CD4-positive, alpha-beta T cell (primary cell): ENCODE measurements at regions of chr19 and their contacts with region 1.

Region 1: DNA sequence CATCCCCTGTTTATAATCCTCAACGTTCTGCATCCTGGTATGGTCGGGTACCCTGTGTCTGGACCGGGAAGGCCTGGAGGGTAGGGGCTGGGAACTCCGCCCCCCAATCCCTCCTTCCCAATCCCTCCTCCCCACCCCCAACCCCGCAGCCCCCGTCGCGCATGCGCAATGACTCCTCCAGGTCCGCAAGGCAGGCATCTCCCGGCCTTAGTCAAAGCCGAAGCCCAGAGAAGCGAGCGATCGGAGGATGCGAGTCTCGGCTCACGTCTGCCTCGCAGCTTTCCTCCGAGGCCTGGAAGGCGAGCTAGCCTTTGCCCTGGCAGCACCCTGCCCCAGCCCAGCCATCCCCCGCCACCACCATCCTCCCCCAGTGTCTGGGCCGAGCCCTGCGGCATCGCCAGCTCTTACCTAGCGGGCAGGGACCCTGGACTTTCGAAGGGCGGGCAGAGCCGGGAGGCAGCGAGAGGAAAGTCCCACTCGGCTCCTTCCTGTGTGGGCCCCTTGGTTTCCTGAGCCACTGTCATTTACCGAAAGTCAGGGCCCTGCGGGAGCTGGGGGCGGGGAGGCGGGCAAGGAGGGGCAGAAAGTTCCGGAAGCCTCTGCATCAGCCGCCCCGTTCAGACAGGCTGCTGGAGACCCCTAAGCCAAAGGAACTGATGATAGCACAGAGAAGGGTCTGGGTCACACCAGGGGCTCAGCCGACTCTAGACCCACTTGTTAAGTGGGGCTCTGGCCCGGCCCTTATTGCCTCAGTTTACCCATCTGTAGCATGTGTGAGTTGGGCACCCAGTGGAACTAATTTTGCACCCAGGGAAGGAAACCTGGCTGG is at the start of gene JAK3:
- DNase-seq: peak; percentile 67 to 93 (median 83)
- ATAC-seq: peak; percentile 81
- H3K4me3 ChIP-seq: peak within 1 kb of the TSS; percentile 65
- H3K4me3 Mint-ChIP-seq: peak within 1 kb of the TSS; percentile 99
- H3K27ac ChIP-seq: peak within 1 kb of the TSS; percentile 90 to 98
- H3K27ac Mint-ChIP-seq: peak within 1 kb of the TSS; percentile 94
- H3K4me1 ChIP-seq: peaks cover 85% of the 10 kb centered on the region
- H3K4me1 Mint-ChIP-seq: peaks cover 72% of the 10 kb centered on the region
- H3K27me3 ChIP-seq: no peaks in the 10 kb centered on the region
- H3K27me3 Mint-ChIP-seq: no peaks in the 10 kb centered on the region
- CTCF ChIP-seq: no peak
- total RNA-seq, gene JAK3: 120 to 121 TPM

Region 2: GRCh38 chr19:16095071-16095571 is 1752.6 kb before region 1 on chr19:
- CTCF ChIA-PET with region 1: no interaction called
- POLR2A ChIA-PET with region 1: no interaction called
- intact Hi-C with region 1: no loop called
- DNase-seq: no peak
- ATAC-seq: peak; percentile 66
- H3K4me3 ChIP-seq: no peak overlapping the region
- H3K4me3 Mint-ChIP-seq: peak overlapping the region; percentile 64
- H3K27ac ChIP-seq: peak overlapping the region in 1 of 2 donors; percentile 41
- H3K27ac Mint-ChIP-seq: peak overlapping the region; percentile 80
- H3K4me1 ChIP-seq: peaks cover 9% of the 10 kb centered on the region
- H3K4me1 Mint-ChIP-seq: peaks cover 32% of the 10 kb centered on the region
- H3K27me3 ChIP-seq: no peaks in the 10 kb centered on the region
- H3K27me3 Mint-ChIP-seq: no peaks in the 10 kb centered on the region
- CTCF ChIP-seq: no peak

Region 3: DNA sequence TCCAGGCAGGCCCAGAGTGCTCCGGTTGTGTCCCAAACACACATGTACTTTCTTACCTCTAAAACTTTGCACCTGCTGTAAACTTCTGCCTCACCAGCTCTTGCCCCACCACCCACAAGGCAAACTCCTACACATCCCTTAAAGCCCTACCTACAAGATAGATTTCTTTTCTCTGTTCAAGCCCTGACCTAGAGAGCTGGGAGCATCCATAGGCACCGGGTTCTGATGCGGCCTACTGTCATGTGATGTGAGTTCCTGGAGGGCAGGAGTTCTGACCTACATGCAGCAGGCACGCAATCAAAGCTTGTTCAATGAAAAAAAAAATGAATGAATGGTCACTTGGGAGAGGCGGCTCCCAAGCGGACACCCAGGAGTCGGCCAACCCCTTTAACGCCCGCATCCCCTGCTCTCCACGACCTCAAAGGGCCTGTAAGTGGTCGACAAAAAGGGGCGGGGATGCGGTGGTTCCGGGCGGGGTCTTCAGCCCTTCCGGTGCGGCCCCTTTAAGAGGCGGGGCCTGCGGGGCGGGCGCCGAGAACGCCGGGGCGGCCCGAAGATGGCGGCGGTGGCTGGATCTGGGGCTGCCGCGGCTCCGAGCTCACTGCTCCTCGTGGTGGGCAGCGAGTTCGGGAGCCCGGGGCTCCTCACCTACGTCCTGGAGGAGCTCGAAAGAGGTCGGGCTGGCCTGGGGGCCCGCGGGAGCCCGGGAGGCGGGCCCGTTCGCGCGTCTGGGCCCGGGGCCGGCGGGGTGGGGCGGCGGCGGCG is 128.6 kb before region 1 on chr19 and contains the start of gene MAP1S:
- CTCF ChIA-PET with region 1: no interaction called
- POLR2A ChIA-PET with region 1: interaction called, 11 read pairs
- intact Hi-C with region 1: no loop called
- DNase-seq: peak; percentile 26 to 74 (median 52)
- ATAC-seq: peak; percentile 88
- H3K4me3 ChIP-seq: peak within 1 kb of the TSS; percentile 92
- H3K4me3 Mint-ChIP-seq: peak within 1 kb of the TSS; percentile 95
- H3K27ac ChIP-seq: no peak within 1 kb of the TSS
- H3K27ac Mint-ChIP-seq: peak within 1 kb of the TSS; percentile 90
- H3K4me1 ChIP-seq: peaks cover 39% of the 10 kb centered on the region
- H3K4me1 Mint-ChIP-seq: peaks cover 36% of the 10 kb centered on the region
- H3K27me3 ChIP-seq: no peaks in the 10 kb centered on the region
- H3K27me3 Mint-ChIP-seq: no peaks in the 10 kb centered on the region
- CTCF ChIP-seq: no peak
- total RNA-seq, gene MAP1S: 18.1 to 21.4 TPM

Region 4: GRCh38 chr19:17747205-17748098 is 100.3 kb before region 1 on chr19:
- CTCF ChIA-PET with region 1: interaction called, 3 read pairs
- POLR2A ChIA-PET with region 1: interaction called, 13 read pairs
- intact Hi-C with region 1: no loop called
- DNase-seq: peak; percentile 88 to 98 (median 94)
- ATAC-seq: peak; percentile 87
- H3K4me3 ChIP-seq: peak overlapping the region; percentile 69
- H3K4me3 Mint-ChIP-seq: peak overlapping the region; percentile 96
- H3K27ac ChIP-seq: no peak overlapping the region
- H3K27ac Mint-ChIP-seq: peak overlapping the region; percentile 82
- H3K4me1 ChIP-seq: peaks cover 56% of the 10 kb centered on the region
- H3K4me1 Mint-ChIP-seq: peaks cover 47% of the 10 kb centered on the region
- H3K27me3 ChIP-seq: no peaks in the 10 kb centered on the region
- H3K27me3 Mint-ChIP-seq: no peaks in the 10 kb centered on the region
- CTCF ChIP-seq: no peak

Region 5: GRCh38 chr19:17794731-17795536 is 52.8 kb before region 1 on chr19 and contains the start of gene B3GNT3:
- CTCF ChIA-PET with region 1: no interaction called
- POLR2A ChIA-PET with region 1: interaction called, 12 read pairs
- intact Hi-C with region 1: no loop called
- DNase-seq: peak in 7 of 14 experiments; percentile 17 to 62 (median 31)
- ATAC-seq: peak; percentile 30
- H3K4me3 ChIP-seq: peak within 1 kb of the TSS; percentile 44
- H3K4me3 Mint-ChIP-seq: peak within 1 kb of the TSS; percentile 82
- H3K27ac ChIP-seq: no peak within 1 kb of the TSS
- H3K27ac Mint-ChIP-seq: peak within 1 kb of the TSS; percentile 72
- H3K4me1 ChIP-seq: peaks cover 65% of the 10 kb centered on the region
- H3K4me1 Mint-ChIP-seq: peaks cover 71% of the 10 kb centered on the region
- H3K27me3 ChIP-seq: no peaks in the 10 kb centered on the region
- H3K27me3 Mint-ChIP-seq: no peaks in the 10 kb centered on the region
- CTCF ChIP-seq: no peak
- total RNA-seq, gene B3GNT3: 0.39 to 0.52 TPM

Region 6: GRCh38 chr19:17803264-17803922 is 44.4 kb before region 1 on chr19:
- CTCF ChIA-PET with region 1: no interaction called
- POLR2A ChIA-PET with region 1: interaction called, 60 read pairs
- intact Hi-C with region 1: no loop called
- DNase-seq: peak in 11 of 14 experiments; percentile 24 to 82 (median 43)
- ATAC-seq: peak; percentile 92
- H3K4me3 ChIP-seq: peak overlapping the region; percentile 14
- H3K4me3 Mint-ChIP-seq: peak overlapping the region; percentile 83
- H3K27ac ChIP-seq: peak overlapping the region in 1 of 2 donors; percentile 30
- H3K27ac Mint-ChIP-seq: peak overlapping the region; percentile 82
- H3K4me1 ChIP-seq: peaks cover 43% of the 10 kb centered on the region
- H3K4me1 Mint-ChIP-seq: peaks cover 56% of the 10 kb centered on the region
- H3K27me3 ChIP-seq: no peaks in the 10 kb centered on the region
- H3K27me3 Mint-ChIP-seq: no peaks in the 10 kb centered on the region
- CTCF ChIP-seq: no peak

Region 7: GRCh38 chr19:17932485-17933338 is 85.0 kb after region 1 on chr19 and contains the start of gene CCDC124:
- CTCF ChIA-PET with region 1: interaction called, 12 read pairs
- POLR2A ChIA-PET with region 1: interaction called, 15 read pairs
- intact Hi-C with region 1: no loop called
- DNase-seq: peak; percentile 84 to 97 (median 92)
- ATAC-seq: peak; percentile 95
- H3K4me3 ChIP-seq: peak within 1 kb of the TSS; percentile 76
- H3K4me3 Mint-ChIP-seq: peak within 1 kb of the TSS; percentile 94
- H3K27ac ChIP-seq: peak within 1 kb of the TSS; percentile 81 to 93
- H3K27ac Mint-ChIP-seq: peak within 1 kb of the TSS; percentile 96
- H3K4me1 ChIP-seq: peaks cover 22% of the 10 kb centered on the region
- H3K4me1 Mint-ChIP-seq: peaks cover 19% of the 10 kb centered on the region
- H3K27me3 ChIP-seq: no peaks in the 10 kb centered on the region
- H3K27me3 Mint-ChIP-seq: no peaks in the 10 kb centered on the region
- CTCF ChIP-seq: peak; percentile 83
- total RNA-seq, gene CCDC124: 26.9 to 28.1 TPM

Region 8: GRCh38 chr19:18173572-18174288 is 326.0 kb after region 1 on chr19 and contains the start of gene IFI30:
- CTCF ChIA-PET with region 1: no interaction called
- POLR2A ChIA-PET with region 1: no interaction called
- intact Hi-C with region 1: no loop called
- DNase-seq: peak in 10 of 14 experiments; percentile 25 to 82 (median 62)
- ATAC-seq: peak; percentile 88
- H3K4me3 ChIP-seq: peak within 1 kb of the TSS; percentile 85
- H3K4me3 Mint-ChIP-seq: peak within 1 kb of the TSS; percentile 92
- H3K27ac ChIP-seq: peak within 1 kb of the TSS; percentile 35 to 78
- H3K27ac Mint-ChIP-seq: peak within 1 kb of the TSS; percentile 64
- H3K4me1 ChIP-seq: peaks cover 29% of the 10 kb centered on the region
- H3K4me1 Mint-ChIP-seq: peaks cover 13% of the 10 kb centered on the region
- H3K27me3 ChIP-seq: no peaks in the 10 kb centered on the region
- H3K27me3 Mint-ChIP-seq: no peaks in the 10 kb centered on the region
- CTCF ChIP-seq: no peak
- total RNA-seq, gene IFI30: 10.6 to 10.7 TPM